RWPE1 (cell line): ENCODE measurements at regions of chr11 and their contacts with region 1.

Region 1: GRCh38 chr11:70230513-70231343 is 27.6 kb downstream of the FADD start:
- DNase-seq: no peak
- H3K27ac ChIP-seq: no peak overlapping the region
- CTCF ChIP-seq: no peak

Region 2: GRCh38 chr11:70319396-70320083 is 88.8 kb after region 1 on chr11:
- CTCF ChIA-PET with region 1: no interaction called
- POLR2A ChIA-PET with region 1: interaction called, 10 read pairs
- DNase-seq: no peak
- H3K27ac ChIP-seq: no peak overlapping the region
- CTCF ChIP-seq: no peak

Region 3: GRCh38 chr11:70423523-70424505 is 193.1 kb after region 1 on chr11:
- CTCF ChIA-PET with region 1: no interaction called
- POLR2A ChIA-PET with region 1: no interaction called
- DNase-seq: no peak
- H3K27ac ChIP-seq: no peak overlapping the region
- CTCF ChIP-seq: no peak